ENCODE measurements at regions of chr9 and their contacts with region 1.

Region 1: DNA sequence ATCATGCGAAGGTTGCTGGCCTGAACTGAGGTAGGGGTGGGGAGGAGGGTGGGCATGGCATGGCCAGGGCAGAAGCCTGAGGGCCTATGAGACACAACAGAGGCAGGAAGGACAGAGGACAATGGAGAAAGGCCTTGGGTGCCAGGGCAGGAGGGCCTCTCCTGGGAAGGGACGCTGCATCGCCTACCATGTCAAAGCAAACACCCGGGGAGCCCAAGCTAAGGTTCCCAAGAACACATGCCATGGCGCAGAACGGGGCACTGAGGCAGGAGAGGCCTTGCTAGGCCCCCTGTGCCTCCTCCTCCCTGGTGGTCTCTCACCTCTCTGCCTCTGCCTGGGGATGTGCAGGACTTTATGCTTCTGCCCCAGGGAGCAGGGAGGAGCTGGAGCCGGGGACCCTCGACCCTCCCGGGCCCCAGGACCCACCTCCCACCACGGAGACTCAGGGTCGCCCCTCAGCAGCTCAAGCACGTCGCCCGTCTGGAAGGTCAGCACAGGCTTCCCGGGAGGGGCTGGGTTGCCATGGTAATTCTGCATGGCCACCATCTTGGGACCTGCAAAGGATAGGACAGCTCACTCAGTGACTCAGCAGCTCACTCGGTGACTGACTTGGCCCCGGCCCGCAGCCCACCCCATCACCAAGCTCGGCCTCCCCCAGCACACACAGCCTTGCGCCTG is 40.3 kb upstream of the SARDH start:
- DNase-seq: no peak
- H3K4me3 ChIP-seq: no peak overlapping the region
- H3K27ac ChIP-seq: no peak overlapping the region
- H3K4me1 ChIP-seq: no peaks in the 10 kb centered on the region
- H3K27me3 ChIP-seq: no peaks in the 10 kb centered on the region
- CTCF ChIP-seq: no peak
- EP300 ChIP-seq: no peak
- POLR2A ChIP-seq: no peak

Region 2: GRCh38 chr9:133752739-133753446 is 25.6 kb before region 1 on chr9:
- intact Hi-C with region 1: loop called in 1 of 4 experiments (anchors 1 kb)
- DNase-seq: no peak
- H3K4me3 ChIP-seq: no peak overlapping the region
- H3K27ac ChIP-seq: no peak overlapping the region
- H3K4me1 ChIP-seq: no peaks in the 10 kb centered on the region
- H3K27me3 ChIP-seq: no peaks in the 10 kb centered on the region
- CTCF ChIP-seq: no peak
- EP300 ChIP-seq: no peak
- POLR2A ChIP-seq: no peak